ENCODE measurements at regions of chr20 and their contacts with region 1.

Region 1: DNA sequence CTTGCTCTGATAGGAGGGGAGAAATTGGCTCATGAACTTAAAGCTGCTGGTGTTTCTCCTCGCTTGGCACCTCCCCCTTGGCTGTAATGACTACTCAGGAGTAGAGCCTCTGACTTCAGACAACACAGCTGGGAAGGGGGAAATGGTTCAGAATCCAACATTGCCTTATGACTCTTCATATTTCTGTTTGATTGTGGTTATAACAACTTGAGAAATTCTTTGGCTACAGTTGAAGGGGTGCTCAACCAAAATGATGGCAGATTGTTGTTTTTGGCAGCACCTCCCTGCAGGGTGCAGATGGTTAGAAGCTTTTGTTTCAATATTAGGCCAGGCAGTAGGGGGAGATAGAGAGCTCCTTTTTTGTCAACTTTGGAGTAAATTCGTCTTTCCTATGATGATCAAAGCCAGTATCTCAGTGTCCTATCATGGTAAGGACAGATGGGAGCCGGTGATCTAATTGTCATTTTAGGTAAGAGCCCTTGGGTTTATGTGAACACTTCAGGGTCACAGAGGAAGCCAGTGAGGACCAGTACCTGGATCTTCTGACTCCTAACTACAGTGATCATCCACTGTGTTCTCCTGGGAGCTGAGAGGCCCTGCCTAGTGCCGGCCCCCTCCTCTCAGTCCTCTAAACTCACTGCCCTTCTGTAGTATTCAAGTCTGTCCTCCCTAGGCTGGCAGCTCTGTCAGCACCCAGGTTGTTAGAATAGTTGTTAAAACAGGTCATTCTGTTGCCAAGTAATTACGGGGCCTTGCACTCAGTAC is 39.9 kb downstream of the RPRD1B start:
- DNase-seq: no peak
- ATAC-seq: peak; percentile 91 to 93
- H3K4me3 ChIP-seq: no peak overlapping the region
- H3K27ac ChIP-seq: peak overlapping the region; percentile 73
- H3K4me1 ChIP-seq: peaks cover 46% of the 10 kb centered on the region
- H3K27me3 ChIP-seq: no peaks in the 10 kb centered on the region
- CTCF ChIP-seq: peak; percentile 73

Region 2: DNA sequence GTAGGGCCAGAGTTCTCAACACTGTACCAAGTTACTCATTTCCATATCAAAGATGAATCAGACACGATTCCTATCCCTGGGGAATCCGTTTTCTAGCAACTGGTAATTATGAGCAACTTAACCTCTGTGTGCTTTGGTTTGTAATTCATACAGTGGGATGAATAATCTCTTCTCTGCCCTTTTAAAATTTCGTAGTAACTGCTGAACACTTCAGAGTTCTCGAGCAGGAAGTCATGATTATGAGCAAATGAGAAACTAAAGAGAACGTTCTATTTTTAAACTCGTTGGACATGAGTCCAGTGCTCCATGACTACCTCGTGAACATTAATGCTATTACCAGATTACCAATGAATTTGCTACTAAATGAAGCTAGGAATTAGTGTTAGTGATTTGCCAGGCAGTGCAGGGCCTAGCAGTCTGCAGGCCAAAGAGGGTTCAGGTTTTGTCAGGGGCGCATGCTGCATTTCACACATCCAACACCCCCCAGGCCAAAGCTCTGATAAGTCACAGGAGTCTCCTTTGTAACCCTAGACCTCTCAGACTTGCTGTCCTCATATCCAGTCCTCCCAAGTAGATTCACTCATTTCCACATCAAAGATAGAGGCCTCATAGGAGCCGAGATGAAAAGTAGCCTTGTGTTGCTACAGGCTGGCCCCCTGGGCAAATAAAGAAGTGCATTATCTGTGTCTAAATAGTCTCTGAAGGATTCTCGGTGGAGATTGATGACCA is 216.4 kb before region 1 on chr20:
- intact Hi-C with region 1: no loop called
- DNase-seq: no peak
- ATAC-seq: no peak
- H3K4me3 ChIP-seq: no peak overlapping the region
- H3K27ac ChIP-seq: no peak overlapping the region
- H3K4me1 ChIP-seq: no peaks in the 10 kb centered on the region
- H3K27me3 ChIP-seq: no peaks in the 10 kb centered on the region
- CTCF ChIP-seq: no peak

Region 3: DNA sequence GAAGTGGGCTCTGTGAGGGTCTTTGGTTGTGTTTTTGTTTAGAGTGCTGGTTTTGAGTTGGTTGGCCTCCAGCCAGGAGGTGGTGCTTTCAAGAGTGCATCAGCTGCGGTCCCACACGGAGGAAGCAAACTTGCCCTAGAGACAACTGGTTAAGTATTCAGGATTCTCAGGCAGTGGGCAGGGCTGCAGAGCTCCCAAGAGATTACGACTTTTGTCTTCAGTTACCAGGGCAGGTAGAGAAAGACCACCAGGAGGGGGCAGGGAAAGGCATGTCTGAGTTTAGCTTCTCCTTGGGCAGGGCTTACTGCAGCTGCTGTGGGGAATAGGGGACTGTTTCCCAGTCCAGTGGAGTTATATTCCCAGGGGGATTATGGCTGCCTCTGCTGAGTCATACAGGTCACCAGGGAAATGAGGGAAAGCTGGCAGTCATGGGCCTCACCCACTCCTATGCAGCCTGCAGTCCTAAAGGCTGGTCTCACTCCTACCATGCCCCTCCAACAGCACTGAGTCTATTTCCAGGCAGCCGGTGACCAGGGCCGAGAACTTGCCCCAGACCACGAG is 104.6 kb before region 1 on chr20:
- intact Hi-C with region 1: no loop called
- DNase-seq: no peak
- ATAC-seq: no peak
- H3K4me3 ChIP-seq: no peak overlapping the region
- H3K27ac ChIP-seq: no peak overlapping the region
- H3K4me1 ChIP-seq: no peaks in the 10 kb centered on the region
- H3K27me3 ChIP-seq: no peaks in the 10 kb centered on the region
- CTCF ChIP-seq: no peak

Region 4: GRCh38 chr20:38165089-38165989 is 91.8 kb after region 1 on chr20 and contains the start of gene TGM2:
- intact Hi-C with region 1: loop called (anchors 10 kb)
- DNase-seq: peak; percentile 92
- ATAC-seq: peak; percentile 94
- H3K4me3 ChIP-seq: peak within 1 kb of the TSS; percentile 69
- H3K27ac ChIP-seq: peak within 1 kb of the TSS; percentile 78
- H3K4me1 ChIP-seq: peaks cover 76% of the 10 kb centered on the region
- H3K27me3 ChIP-seq: no peaks in the 10 kb centered on the region
- CTCF ChIP-seq: peak; percentile 87
- total RNA-seq, gene TGM2: 362 TPM

Measured in lower lobe of right lung (tissue), 2 donors.